Right ventricle myocardium superior (tissue), 1 donor: ENCODE measurements at regions of chr10 and their contacts with region 1.

Region 1: DNA sequence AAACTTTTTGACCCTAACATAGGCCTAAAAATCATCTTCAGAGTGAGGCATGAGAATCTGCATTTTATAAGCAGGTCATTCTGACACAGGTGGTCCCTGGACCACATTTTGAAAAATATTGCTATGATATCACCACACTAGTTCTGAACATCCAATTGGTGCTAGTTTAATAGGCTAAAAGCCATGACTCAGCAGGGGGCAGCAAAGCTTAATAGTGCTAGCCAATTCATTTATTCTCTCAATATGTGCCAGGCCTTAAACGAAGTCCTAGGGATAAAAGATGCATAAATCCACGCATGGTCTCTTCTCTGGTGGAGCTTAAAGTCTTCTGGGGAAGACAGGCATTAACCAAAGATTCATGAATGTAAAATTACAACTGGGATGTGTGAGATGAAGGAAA is 10.2 kb upstream of the SLC25A28 start:
- DNase-seq: no peak
- ATAC-seq: no peak

Region 2: DNA sequence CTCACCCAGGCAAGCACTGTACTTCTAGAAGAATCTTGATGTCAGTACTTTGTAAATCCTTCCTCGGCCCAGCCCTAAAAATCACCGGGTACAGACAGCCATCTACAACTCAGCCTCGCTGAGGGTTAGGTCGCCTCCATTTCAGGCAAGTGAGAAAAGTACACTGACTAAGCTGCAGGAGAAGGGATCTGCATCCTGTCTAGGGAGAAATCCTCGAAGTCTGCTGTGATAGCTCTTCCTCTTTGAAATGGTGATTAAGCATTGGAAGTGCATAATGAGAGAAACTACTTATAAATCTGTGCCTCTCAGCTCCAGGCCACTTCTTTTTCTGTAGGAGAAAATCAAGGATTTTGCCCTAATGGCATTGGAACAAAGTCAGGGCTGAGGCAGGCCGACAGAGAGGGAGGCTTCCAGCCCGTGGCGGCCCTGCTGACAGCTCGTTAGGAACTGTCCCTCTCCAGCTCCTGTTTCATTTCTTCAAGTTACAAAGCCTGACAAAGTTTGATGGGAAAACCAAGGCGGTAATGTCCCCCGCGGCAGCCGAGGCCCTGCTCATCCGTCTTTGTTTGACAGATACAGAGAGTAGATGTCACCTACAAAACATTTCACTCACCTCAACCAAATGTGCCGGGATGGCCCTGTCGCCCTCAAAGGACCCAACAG is 185.9 kb before region 1 on chr10:
- intact Hi-C with region 1: no loop called
- DNase-seq: no peak
- ATAC-seq: no peak

Region 3: DNA sequence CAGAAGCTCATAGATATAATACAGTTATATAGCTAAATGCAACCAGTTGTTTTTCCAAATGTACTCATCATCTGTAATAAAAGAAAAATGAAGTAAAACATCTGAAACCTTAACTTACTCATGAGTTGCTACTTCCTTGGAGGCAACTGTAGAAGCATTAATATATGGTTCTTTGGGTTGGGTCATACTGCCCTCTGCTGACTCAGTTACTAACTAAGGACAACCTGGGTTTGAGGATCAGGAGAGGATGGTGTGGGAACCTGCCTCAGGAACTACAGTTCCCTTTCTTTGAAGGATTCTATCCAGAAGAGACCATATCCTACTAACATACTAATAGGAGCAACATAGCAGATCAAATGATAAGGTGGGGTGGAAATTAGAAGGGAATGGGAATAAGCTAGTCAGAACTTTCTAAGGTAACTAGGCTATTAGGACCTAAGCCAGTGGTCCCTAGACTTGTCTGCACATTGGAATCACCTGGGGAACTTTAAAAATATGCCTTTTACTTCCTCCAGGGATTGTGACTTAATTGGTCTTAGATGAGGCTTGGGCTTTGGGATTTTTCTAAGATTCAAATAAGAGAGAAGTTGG is 80.8 kb after region 1 on chr10:
- intact Hi-C with region 1: loop called (anchors 10 kb)
- DNase-seq: no peak
- ATAC-seq: peak; percentile 79

Region 4: DNA sequence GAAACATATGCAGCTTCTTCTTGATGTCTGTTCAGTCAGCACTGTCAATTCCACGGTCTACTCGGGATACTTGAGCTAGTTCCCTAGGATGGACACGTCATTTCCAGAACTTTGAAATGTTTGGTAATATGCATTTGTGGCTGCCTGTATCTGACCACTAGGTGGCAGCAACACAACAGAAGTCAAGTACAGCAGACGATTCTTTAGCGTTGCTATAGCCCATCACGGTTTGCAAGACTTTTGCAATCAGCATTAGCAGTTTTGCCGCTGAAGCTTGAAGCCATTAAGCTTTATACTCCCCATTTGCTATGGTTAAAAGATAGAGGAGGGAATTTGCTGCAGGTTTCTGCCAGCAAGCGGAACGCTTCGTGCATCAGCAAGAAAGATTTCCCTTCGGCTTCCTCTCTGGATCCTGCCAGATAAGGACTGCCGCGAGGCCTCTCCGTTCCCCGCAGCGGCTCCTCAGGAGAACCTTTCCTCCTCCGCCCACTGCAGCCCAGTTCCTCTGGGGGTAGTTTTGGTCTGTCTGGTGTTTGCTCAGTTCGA is 215.5 kb after region 1 on chr10:
- intact Hi-C with region 1: no loop called
- DNase-seq: peak; percentile 54
- ATAC-seq: peak; percentile 97